ENCODE measurements at regions of chr5 and their contacts with region 1.

Region 1: DNA sequence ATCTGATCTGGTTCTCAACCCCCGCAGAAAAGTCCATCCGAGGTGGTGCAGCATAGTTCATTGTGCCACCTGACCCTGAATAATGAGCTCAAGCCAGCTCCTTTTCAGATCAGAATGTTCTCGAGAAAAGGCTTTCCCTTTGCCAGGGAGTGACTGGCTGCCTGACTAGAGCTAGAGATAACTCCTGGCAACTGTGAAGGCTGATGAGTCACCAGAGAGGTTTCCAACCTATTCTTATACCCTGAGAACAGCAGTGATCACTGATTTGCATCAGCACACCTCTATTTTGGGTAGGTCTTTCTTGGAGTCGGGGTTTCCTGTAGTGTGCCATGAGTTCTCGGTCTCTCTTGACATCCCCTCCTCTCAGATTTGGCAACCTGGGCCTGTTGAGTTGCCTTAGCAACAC is 127.9 kb downstream of the PIK3R1 start:
- DNase-seq: peak; percentile 6
- H3K4me3 Mint-ChIP-seq: no peak overlapping the region
- H3K27ac Mint-ChIP-seq: no peak overlapping the region
- H3K4me1 Mint-ChIP-seq: peaks cover 38% of the 10 kb centered on the region
- H3K27me3 Mint-ChIP-seq: peaks cover 7% of the 10 kb centered on the region

Region 2: GRCh38 chr5:68303038-68303738 is 40.2 kb before region 1 on chr5:
- intact Hi-C with region 1: loop called (anchors 5 kb)
- DNase-seq: no peak
- H3K4me3 Mint-ChIP-seq: no peak overlapping the region
- H3K27ac Mint-ChIP-seq: peak overlapping the region; percentile 70
- H3K4me1 Mint-ChIP-seq: peaks cover 34% of the 10 kb centered on the region
- H3K27me3 Mint-ChIP-seq: peaks cover 12% of the 10 kb centered on the region

Region 3: DNA sequence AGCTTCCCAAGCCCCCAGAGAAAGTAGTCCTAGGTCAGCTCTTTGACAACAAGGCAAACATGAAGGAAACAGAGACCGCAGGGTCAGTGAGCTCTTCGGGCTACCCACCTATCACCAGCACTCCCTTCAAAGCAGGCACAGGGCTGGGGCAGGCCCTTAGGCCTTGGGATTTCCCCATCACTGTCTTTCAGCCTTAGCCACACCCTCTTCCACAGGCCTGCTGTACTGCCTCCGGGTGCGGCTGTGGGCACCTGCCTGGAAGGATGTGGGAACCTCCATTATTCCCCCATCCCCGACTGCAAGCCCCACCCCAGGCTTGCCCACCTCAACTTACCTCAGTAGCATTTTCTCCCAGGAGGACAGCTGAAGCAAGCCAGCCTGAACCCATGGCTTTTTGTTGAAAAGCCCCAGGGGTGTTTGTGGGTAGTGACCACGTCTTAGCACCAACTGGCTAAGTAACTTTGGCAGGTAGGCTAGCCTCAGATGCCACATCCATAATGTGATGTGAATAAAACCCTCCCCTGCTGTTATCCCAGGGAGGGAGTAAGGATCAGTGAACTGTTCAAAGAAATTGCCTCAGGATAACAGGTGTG is 27.6 kb before region 1 on chr5:
- intact Hi-C with region 1: loop called (anchors 1 kb)
- DNase-seq: peak; percentile 39
- H3K4me3 Mint-ChIP-seq: no peak overlapping the region
- H3K27ac Mint-ChIP-seq: no peak overlapping the region
- H3K4me1 Mint-ChIP-seq: peaks cover 18% of the 10 kb centered on the region
- H3K27me3 Mint-ChIP-seq: peaks cover 20% of the 10 kb centered on the region

Region 4: DNA sequence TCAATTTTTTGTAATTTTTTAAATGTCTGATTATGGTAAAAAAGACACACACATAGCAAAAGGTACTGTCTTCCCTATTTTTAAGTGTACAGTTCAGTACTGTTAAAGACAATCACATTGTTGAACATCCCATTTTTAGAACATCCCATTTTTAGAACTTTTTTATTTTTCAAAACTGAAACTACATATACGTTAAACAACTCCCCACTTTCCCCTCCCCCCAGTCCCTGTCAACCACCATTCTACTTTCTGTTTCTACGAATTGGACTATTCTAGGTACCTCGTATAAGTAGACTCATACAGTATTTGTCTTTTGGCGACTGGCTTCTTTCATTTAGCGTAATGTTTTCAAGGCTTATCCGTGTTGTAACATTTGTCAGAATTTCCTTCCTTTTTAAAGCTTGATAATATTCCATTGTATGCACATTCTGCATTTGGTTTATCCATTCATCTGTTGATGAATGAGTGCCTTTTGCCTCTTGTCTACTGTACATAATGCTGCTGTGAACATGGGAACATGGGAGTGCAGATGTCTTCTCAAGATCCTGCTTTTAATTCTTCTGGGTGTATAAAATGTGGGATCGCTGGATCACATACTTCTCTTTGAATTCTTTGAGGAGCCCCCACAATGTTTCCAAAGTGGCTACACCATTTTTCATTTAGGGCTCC is 26.2 kb after region 1 on chr5:
- intact Hi-C with region 1: loop called (anchors 1 kb)
- DNase-seq: peak; percentile 48
- H3K4me3 Mint-ChIP-seq: peak overlapping the region; percentile 46
- H3K27ac Mint-ChIP-seq: peak overlapping the region; percentile 79
- H3K4me1 Mint-ChIP-seq: peaks cover 61% of the 10 kb centered on the region
- H3K27me3 Mint-ChIP-seq: peaks cover 1% of the 10 kb centered on the region

Region 5: DNA sequence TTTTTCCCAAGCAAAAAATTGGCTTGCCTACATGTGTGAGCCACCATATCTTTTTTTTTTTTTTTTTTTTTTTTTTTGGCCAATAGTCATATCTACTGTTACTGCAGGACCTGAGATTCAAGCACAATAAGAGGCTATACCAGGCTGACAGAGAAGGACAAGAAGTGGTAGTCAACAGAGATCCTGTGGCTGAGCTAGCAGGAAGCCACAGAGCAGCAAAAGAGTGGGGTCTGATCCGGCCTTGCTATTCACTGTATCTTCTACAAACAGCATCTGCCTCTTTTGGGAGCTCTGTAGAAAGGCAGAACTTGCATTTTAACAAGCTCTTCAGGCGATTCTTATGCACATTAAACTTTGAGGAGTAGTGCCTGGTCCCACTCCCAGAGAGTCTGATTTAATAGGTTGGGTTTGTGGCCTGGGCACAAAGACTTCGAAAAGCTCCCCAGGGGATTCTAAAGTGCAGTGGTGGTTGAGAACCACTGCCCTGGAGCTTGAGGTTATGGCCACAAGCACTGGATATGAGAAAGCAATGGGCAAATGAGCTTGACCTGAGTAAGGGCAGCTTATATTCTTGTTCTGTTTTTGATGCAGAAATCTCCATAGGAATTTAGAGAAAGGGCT is 34.9 kb after region 1 on chr5:
- intact Hi-C with region 1: loop called (anchors 1 kb)
- DNase-seq: no peak
- H3K4me3 Mint-ChIP-seq: no peak overlapping the region
- H3K27ac Mint-ChIP-seq: peak overlapping the region; percentile 14
- H3K4me1 Mint-ChIP-seq: peaks cover 58% of the 10 kb centered on the region
- H3K27me3 Mint-ChIP-seq: no peaks in the 10 kb centered on the region

Region 6: DNA sequence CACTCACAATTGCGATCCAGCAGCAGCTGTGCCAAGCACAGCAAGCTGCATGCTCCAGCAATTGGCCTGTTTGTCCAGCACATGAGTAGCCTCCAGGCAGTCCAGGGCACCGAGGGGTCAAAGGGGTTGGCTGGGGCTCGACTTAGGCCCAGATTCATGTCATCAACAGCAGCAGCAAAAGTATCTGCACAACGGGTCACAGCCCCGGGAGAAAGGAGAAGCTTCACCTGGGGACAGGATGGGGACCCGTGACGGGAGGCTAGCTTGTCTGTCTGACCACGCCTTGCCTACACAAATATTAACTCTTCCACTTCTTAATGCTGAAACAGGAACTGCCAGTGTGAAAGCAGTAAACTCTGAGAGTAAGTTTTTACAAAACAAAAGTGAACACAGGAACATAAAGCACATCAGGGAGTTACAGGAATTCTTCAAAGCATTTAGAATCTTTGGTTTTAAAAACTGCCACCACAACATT is 63.4 kb after region 1 on chr5:
- intact Hi-C with region 1: loop called (anchors 2 kb)
- DNase-seq: no peak
- H3K4me3 Mint-ChIP-seq: peak overlapping the region; percentile 47
- H3K27ac Mint-ChIP-seq: peak overlapping the region; percentile 81
- H3K4me1 Mint-ChIP-seq: peaks cover 30% of the 10 kb centered on the region
- H3K27me3 Mint-ChIP-seq: peaks cover 2% of the 10 kb centered on the region

Region 7: GRCh38 chr5:68424799-68425537 is 81.5 kb after region 1 on chr5:
- intact Hi-C with region 1: loop called (anchors 1 kb)
- DNase-seq: peak; percentile 20
- H3K4me3 Mint-ChIP-seq: peak overlapping the region; percentile 6
- H3K27ac Mint-ChIP-seq: peak overlapping the region; percentile 19
- H3K4me1 Mint-ChIP-seq: peaks cover 46% of the 10 kb centered on the region
- H3K27me3 Mint-ChIP-seq: peaks cover 5% of the 10 kb centered on the region

Region 8: DNA sequence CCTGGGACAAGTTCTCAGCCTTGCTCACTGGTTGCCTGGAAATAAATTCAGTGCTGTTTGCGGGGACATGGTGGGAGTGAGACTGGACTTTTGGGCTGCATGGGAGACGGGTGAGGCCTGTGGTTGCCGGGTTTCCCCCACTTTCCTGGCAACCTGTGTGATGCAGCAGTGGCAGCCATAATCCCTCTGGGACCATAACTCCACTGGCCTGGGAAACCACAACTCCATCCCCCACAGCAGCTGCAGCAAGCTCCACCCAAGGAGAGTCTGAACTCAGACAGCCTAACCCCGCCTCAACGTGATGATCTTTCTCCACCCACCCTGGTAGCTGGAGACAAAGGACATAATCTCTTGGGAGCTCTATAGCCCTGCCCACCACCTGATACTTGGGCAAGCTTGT is 222.0 kb after region 1 on chr5:
- intact Hi-C with region 1: no loop called
- DNase-seq: no peak
- H3K4me3 Mint-ChIP-seq: no peak overlapping the region
- H3K27ac Mint-ChIP-seq: no peak overlapping the region
- H3K4me1 Mint-ChIP-seq: no peaks in the 10 kb centered on the region
- H3K27me3 Mint-ChIP-seq: peaks cover 3% of the 10 kb centered on the region

Measured in activated T-helper 1 cell treated with anti-CD3 and anti-CD28 coated beads, Interleukin-12 subunit alpha, Interleukin-12 subunit beta, Interleukin-2, Interleukin-4 antibody, amounts not matched to agents 30 ng/mL and 10 ng/mL and 1 ng/mL, durations not matched to agents 14 hours and 24 hours and 36 hours (primary cell).